Naive thymus-derived CD4-positive, alpha-beta T cell (primary cell): ENCODE measurements at regions of chr11 and their contacts with region 1.

Region 1: GRCh38 chr11:130314750-130315285 is at the start of gene ZBTB44:
- DNase-seq: peak; percentile 77 to 91 (median 85)
- ATAC-seq: peak; percentile 94
- H3K4me3 ChIP-seq: peak within 1 kb of the TSS; percentile 68
- H3K4me3 Mint-ChIP-seq: peak within 1 kb of the TSS; percentile 90 to 99 (median 96)
- H3K27ac ChIP-seq: peak within 1 kb of the TSS; percentile 89
- H3K27ac Mint-ChIP-seq: peak within 1 kb of the TSS; percentile 93 to 99 (median 98)
- H3K4me1 ChIP-seq: peaks cover 8 to 16% of the 10 kb centered on the region in 2 donors
- H3K4me1 Mint-ChIP-seq: peaks cover 33 to 54% (median 40%) of the 10 kb centered on the region in 7 donors
- H3K27me3 ChIP-seq: no peaks in the 10 kb centered on the region
- H3K27me3 Mint-ChIP-seq: peaks cover 0 to 6% (median 0%) of the 10 kb centered on the region in 5 donors
- total RNA-seq, gene ZBTB44: 45.3 to 83.4 (median 53.5) TPM

Region 2: GRCh38 chr11:129815596-129816461 is 499.0 kb before region 1 on chr11 and contains the start of gene TMEM45B:
- CTCF ChIA-PET with region 1: no interaction called
- POLR2A ChIA-PET with region 1: no interaction called
- intact Hi-C with region 1: loop called in 1 of 2 experiments (anchors 10 kb)
- DNase-seq: peak; percentile 27 to 57 (median 45)
- ATAC-seq: peak; percentile 38
- H3K4me3 ChIP-seq: peak within 1 kb of the TSS; percentile 54
- H3K4me3 Mint-ChIP-seq: peak within 1 kb of the TSS; percentile 83 to 91 (median 88)
- H3K27ac ChIP-seq: peak within 1 kb of the TSS; percentile 31
- H3K27ac Mint-ChIP-seq: peak within 1 kb of the TSS; percentile 84 to 99 (median 95)
- H3K4me1 ChIP-seq: peaks cover 5 to 9% of the 10 kb centered on the region in 2 donors
- H3K4me1 Mint-ChIP-seq: peaks cover 29 to 79% (median 61%) of the 10 kb centered on the region in 7 donors
- H3K27me3 ChIP-seq: no peaks in the 10 kb centered on the region
- H3K27me3 Mint-ChIP-seq: peaks cover 0 to 75% (median 17%) of the 10 kb centered on the region in 5 donors
- total RNA-seq, gene TMEM45B: 2.3 to 40.8 (median 3.6) TPM

Region 3: GRCh38 chr11:130213143-130213978 is 101.5 kb before region 1 on chr11:
- CTCF ChIA-PET with region 1: no interaction called
- POLR2A ChIA-PET with region 1: no interaction called
- intact Hi-C with region 1: loop called (anchors 1 kb)
- DNase-seq: peak; percentile 39 to 83 (median 67)
- ATAC-seq: peak; percentile 92
- H3K4me3 ChIP-seq: no peak overlapping the region
- H3K4me3 Mint-ChIP-seq: no peak overlapping the region
- H3K27ac ChIP-seq: no peak overlapping the region
- H3K27ac Mint-ChIP-seq: no peak overlapping the region
- H3K4me1 ChIP-seq: no peaks in the 10 kb centered on the region
- H3K4me1 Mint-ChIP-seq: peaks cover 0 to 2% (median 0%) of the 10 kb centered on the region in 7 donors
- H3K27me3 ChIP-seq: no peaks in the 10 kb centered on the region
- H3K27me3 Mint-ChIP-seq: peaks cover 0 to 11% (median 0%) of the 10 kb centered on the region in 5 donors

Region 4: GRCh38 chr11:130340671-130341319 is 26.0 kb after region 1 on chr11:
- CTCF ChIA-PET with region 1: interaction called, 5 read pairs
- POLR2A ChIA-PET with region 1: no interaction called
- intact Hi-C with region 1: loop called in 1 of 2 experiments (anchors 1 kb)
- DNase-seq: peak in 2 of 9 donors; percentile 5 to 27
- ATAC-seq: peak; percentile 55
- H3K4me3 ChIP-seq: no peak overlapping the region
- H3K4me3 Mint-ChIP-seq: peak overlapping the region in 3 of 10 donors; percentile 13 to 52 (median 14)
- H3K27ac ChIP-seq: no peak overlapping the region
- H3K27ac Mint-ChIP-seq: peak overlapping the region in 2 of 9 donors; percentile 14 to 86
- H3K4me1 ChIP-seq: peaks cover 0 to 20% of the 10 kb centered on the region in 2 donors
- H3K4me1 Mint-ChIP-seq: peaks cover 0 to 27% (median 4%) of the 10 kb centered on the region in 7 donors
- H3K27me3 ChIP-seq: no peaks in the 10 kb centered on the region
- H3K27me3 Mint-ChIP-seq: no peaks in the 10 kb centered on the region

Region 5: DNA sequence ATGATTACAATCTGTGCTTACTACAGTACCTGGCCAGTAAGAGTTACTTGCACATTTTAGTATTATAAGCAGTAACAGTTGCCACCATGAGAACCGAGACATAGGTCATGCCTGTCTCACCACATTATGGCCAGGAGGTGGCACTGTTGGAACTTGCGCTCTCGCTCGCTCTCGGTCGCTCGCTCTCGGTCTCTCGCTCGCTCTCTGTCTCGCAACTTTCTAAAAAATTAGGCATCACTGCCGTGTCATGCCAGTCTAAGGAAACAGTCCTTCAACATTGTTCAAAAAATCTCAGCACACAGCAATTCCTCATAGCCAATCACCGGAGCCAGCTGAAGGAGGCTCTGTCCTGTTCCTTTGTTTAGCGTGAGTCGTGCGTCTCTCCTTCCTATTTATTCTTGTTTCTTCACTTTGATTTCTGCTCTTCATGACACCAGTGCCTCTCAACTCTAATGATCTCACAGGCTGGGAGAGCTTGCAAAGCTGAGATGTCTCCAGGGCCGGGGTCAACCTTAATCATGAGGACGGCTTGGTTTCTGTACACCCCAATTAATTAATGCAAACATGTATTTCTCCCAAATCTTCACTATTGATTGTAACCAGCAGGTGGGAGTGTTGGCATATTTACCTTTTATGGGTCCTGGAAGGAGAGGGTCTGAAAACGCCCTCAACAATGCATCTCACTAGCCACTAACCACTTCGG is 119.9 kb after region 1 on chr11:
- CTCF ChIA-PET with region 1: no interaction called
- POLR2A ChIA-PET with region 1: interaction called, 3 read pairs
- intact Hi-C with region 1: loop called in 1 of 2 experiments (anchors 1 kb)
- DNase-seq: peak; percentile 34 to 67 (median 63)
- ATAC-seq: peak; percentile 93
- H3K4me3 ChIP-seq: peak overlapping the region; percentile 87
- H3K4me3 Mint-ChIP-seq: no peak overlapping the region
- H3K27ac ChIP-seq: peak overlapping the region; percentile 45
- H3K27ac Mint-ChIP-seq: no peak overlapping the region
- H3K4me1 ChIP-seq: peaks cover 0 to 8% of the 10 kb centered on the region in 2 donors
- H3K4me1 Mint-ChIP-seq: peaks cover 14 to 28% (median 16%) of the 10 kb centered on the region in 7 donors
- H3K27me3 ChIP-seq: no peaks in the 10 kb centered on the region
- H3K27me3 Mint-ChIP-seq: peaks cover 15 to 32% (median 18%) of the 10 kb centered on the region in 5 donors

Region 6: DNA sequence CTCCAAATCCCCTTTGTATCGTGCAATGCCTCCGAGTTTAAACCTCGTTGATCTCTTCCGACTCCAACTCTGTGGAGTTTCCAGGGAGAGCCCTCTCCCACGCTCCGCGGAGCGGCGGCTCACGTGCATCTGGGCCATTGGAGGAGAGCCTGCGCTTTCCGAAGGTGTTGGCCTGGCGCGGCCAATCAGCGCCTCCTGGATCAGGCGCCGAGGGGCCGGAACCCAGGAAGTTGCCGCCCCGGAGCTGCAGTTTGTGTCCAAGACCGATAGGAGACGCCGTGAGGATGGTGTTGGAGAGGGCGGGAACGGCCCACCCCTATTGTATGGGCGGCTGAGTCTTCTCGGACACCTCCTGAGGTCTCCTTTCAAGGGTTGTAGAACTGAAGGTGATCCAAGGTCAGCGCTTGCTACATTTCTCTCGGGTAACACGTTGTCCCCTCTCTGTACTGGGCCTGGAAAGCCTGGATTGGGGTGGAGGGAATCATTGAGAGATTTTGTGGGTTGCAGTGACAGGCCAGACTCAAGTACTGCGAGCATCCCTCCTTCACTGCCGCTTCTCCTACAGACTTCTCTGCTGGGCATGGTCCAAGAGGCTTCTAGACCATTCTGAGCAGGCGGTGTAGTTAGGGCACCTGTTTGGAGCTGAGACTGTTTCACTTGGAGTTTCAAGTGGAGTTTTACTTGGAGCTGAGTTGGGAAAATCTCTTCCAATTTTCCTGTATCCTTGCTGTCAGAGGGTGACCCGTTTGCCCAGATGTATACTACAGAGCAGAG is 135.4 kb after region 1 on chr11:
- CTCF ChIA-PET with region 1: no interaction called
- POLR2A ChIA-PET with region 1: no interaction called
- intact Hi-C with region 1: no loop called
- DNase-seq: no peak
- ATAC-seq: no peak
- H3K4me3 ChIP-seq: no peak overlapping the region
- H3K4me3 Mint-ChIP-seq: peak overlapping the region in 2 of 10 donors; percentile 40 to 50
- H3K27ac ChIP-seq: no peak overlapping the region
- H3K27ac Mint-ChIP-seq: no peak overlapping the region
- H3K4me1 ChIP-seq: no peaks in the 10 kb centered on the region
- H3K4me1 Mint-ChIP-seq: peaks cover 0 to 11% (median 4%) of the 10 kb centered on the region in 7 donors
- H3K27me3 ChIP-seq: no peaks in the 10 kb centered on the region
- H3K27me3 Mint-ChIP-seq: peaks cover 9 to 74% (median 39%) of the 10 kb centered on the region in 5 donors